Naive thymus-derived CD4-positive, alpha-beta T cell (primary cell): ENCODE measurements at regions of chr21 and their contacts with region 1.

Region 1: GRCh38 chr21:39313571-39314142 is at the start of gene BRWD1:
- DNase-seq: peak; percentile 73 to 90 (median 84)
- ATAC-seq: peak; percentile 71
- H3K4me3 ChIP-seq: peak within 1 kb of the TSS; percentile 88
- H3K4me3 Mint-ChIP-seq: peak within 1 kb of the TSS; percentile 91 to 97 (median 94)
- H3K27ac ChIP-seq: peak within 1 kb of the TSS; percentile 92
- H3K27ac Mint-ChIP-seq: peak within 1 kb of the TSS; percentile 89 to 98 (median 94)
- H3K4me1 ChIP-seq: peaks cover 11% of the 10 kb centered on the region in 2 donors
- H3K4me1 Mint-ChIP-seq: peaks cover 28 to 51% (median 45%) of the 10 kb centered on the region in 7 donors
- H3K27me3 ChIP-seq: no peaks in the 10 kb centered on the region
- H3K27me3 Mint-ChIP-seq: no peaks in the 10 kb centered on the region
- total RNA-seq, gene BRWD1: 41.1 to 108 (median 83.9) TPM

Region 2: GRCh38 chr21:39175154-39175553 is 138.5 kb before region 1 on chr21:
- CTCF ChIA-PET with region 1: no interaction called
- POLR2A ChIA-PET with region 1: no interaction called
- intact Hi-C with region 1: no loop called
- DNase-seq: peak in 5 of 9 donors; percentile 9 to 29 (median 13)
- ATAC-seq: no peak
- H3K4me3 ChIP-seq: no peak overlapping the region
- H3K4me3 Mint-ChIP-seq: no peak overlapping the region
- H3K27ac ChIP-seq: no peak overlapping the region
- H3K27ac Mint-ChIP-seq: no peak overlapping the region
- H3K4me1 ChIP-seq: no peaks in the 10 kb centered on the region
- H3K4me1 Mint-ChIP-seq: peaks cover 0 to 18% (median 11%) of the 10 kb centered on the region in 7 donors
- H3K27me3 ChIP-seq: no peaks in the 10 kb centered on the region
- H3K27me3 Mint-ChIP-seq: no peaks in the 10 kb centered on the region

Region 3: DNA sequence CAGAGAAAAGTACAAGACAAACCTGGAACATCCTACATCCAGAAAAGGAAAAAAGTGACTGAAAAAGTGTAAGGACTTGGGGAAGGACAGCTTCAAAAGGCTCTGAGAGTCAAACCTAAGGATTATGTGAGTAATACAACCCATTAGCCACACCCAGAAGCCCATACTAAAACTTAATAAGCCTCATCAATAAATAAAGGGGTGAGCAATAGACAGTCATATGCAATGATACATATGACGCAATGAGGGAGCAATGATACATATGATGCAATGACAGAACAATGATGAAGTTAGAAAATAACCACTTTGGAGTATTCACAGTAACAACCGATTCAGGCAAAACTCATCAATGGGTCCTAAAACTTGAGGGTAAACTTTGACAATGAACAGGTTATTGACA is 50.3 kb before region 1 on chr21:
- CTCF ChIA-PET with region 1: no interaction called
- POLR2A ChIA-PET with region 1: no interaction called
- intact Hi-C with region 1: loop called in 1 of 2 experiments (anchors 5 kb)
- DNase-seq: no peak
- ATAC-seq: no peak
- H3K4me3 ChIP-seq: no peak overlapping the region
- H3K4me3 Mint-ChIP-seq: no peak overlapping the region
- H3K27ac ChIP-seq: no peak overlapping the region
- H3K27ac Mint-ChIP-seq: no peak overlapping the region
- H3K4me1 ChIP-seq: no peaks in the 10 kb centered on the region
- H3K4me1 Mint-ChIP-seq: peaks cover 0 to 19% (median 8%) of the 10 kb centered on the region in 7 donors
- H3K27me3 ChIP-seq: no peaks in the 10 kb centered on the region
- H3K27me3 Mint-ChIP-seq: no peaks in the 10 kb centered on the region

Region 4: DNA sequence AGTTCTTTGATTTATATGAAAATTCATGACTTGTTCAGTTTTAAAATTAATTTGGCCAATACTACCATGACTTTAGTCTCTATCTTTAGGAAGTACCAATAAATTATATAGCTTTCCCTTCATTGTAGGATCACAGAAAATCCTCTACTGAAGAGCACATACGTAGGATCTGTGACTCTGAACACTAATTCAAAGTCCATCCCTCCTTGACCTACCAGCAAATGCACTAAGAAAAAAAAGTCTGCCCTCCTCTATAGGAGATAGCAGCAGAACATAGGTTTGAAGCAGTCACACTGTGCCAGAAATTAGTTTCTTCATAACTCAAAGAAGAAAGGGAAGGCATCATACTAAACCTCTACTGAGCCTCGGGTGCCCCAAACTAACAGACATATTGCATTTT is 16.8 kb before region 1 on chr21:
- CTCF ChIA-PET with region 1: no interaction called
- POLR2A ChIA-PET with region 1: interaction called, 13 read pairs
- intact Hi-C with region 1: no loop called
- DNase-seq: no peak
- ATAC-seq: no peak
- H3K4me3 ChIP-seq: no peak overlapping the region
- H3K4me3 Mint-ChIP-seq: peak overlapping the region in 2 of 10 donors; percentile 36 to 54
- H3K27ac ChIP-seq: no peak overlapping the region
- H3K27ac Mint-ChIP-seq: peak overlapping the region in 2 of 9 donors; percentile 37 to 62
- H3K4me1 ChIP-seq: peaks cover 9 to 12% of the 10 kb centered on the region in 2 donors
- H3K4me1 Mint-ChIP-seq: peaks cover 19 to 51% (median 39%) of the 10 kb centered on the region in 7 donors
- H3K27me3 ChIP-seq: no peaks in the 10 kb centered on the region
- H3K27me3 Mint-ChIP-seq: no peaks in the 10 kb centered on the region

Region 5: DNA sequence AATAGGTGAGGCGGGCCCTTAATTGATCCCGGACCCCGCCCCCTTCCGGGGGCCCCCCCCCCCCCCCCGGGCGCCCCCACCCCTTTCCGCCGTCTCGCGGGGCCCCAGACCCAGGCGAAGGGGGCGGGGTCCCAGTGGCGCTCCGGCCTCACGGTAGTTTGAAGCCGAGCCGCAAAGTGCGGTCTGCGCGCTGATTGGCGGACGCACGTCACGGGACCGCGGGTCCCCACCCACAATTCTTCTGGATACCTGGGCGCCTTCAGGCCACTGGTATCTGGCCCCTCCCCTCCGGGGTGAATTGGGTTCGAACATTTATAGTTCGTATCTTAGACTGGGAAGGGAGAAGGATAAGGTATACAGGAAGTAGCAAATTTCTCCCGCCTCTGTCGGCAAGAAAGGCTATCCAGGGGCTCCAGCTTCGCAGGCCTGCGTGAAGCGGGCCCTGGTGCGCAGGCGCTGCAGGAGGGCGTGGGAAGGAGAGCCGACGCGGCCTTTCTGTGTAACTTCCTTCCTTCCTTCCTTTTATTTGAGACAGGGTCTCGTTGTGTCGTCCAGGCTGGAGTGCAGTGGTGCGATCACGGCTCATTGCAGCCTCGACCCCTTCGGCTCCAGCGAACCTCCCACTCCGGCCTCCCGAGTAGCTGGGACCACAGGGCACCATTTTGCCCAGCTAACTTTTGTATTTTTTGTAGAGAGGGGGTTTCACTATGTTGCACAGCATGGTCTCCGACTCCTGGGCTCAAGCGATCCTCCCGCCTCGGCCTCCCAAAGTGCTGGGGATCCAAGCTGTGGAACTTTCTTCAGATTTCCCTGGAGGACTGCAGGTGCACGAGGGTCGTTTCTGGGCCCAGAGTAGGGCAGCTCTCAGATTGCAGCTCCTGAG is 35.8 kb after region 1 on chr21:
- CTCF ChIA-PET with region 1: interaction called, 6 read pairs
- POLR2A ChIA-PET with region 1: interaction called, 139 read pairs
- intact Hi-C with region 1: loop called (anchors 1 kb)
- DNase-seq: peak; percentile 91 to 98 (median 97)
- ATAC-seq: peak; percentile 91
- H3K4me3 ChIP-seq: peak overlapping the region; percentile 79
- H3K4me3 Mint-ChIP-seq: peak overlapping the region; percentile 88 to 99 (median 96)
- H3K27ac ChIP-seq: peak overlapping the region; percentile 87
- H3K27ac Mint-ChIP-seq: peak overlapping the region; percentile 94 to 100 (median 99)
- H3K4me1 ChIP-seq: peaks cover 20 to 25% of the 10 kb centered on the region in 2 donors
- H3K4me1 Mint-ChIP-seq: peaks cover 30 to 49% (median 37%) of the 10 kb centered on the region in 7 donors
- H3K27me3 ChIP-seq: no peaks in the 10 kb centered on the region
- H3K27me3 Mint-ChIP-seq: peaks cover 0 to 16% (median 0%) of the 10 kb centered on the region in 5 donors

Region 6: GRCh38 chr21:39379986-39380891 is 66.6 kb after region 1 on chr21:
- CTCF ChIA-PET with region 1: no interaction called
- POLR2A ChIA-PET with region 1: interaction called, 17 read pairs
- intact Hi-C with region 1: loop called (anchors 1 to 2 kb)
- DNase-seq: peak; percentile 76 to 91 (median 83)
- ATAC-seq: peak; percentile 99
- H3K4me3 ChIP-seq: peak overlapping the region; percentile 95
- H3K4me3 Mint-ChIP-seq: peak overlapping the region; percentile 88 to 95 (median 92)
- H3K27ac ChIP-seq: peak overlapping the region; percentile 84
- H3K27ac Mint-ChIP-seq: peak overlapping the region; percentile 33 to 95 (median 93)
- H3K4me1 ChIP-seq: peaks cover 7 to 10% of the 10 kb centered on the region in 2 donors
- H3K4me1 Mint-ChIP-seq: peaks cover 8 to 31% (median 24%) of the 10 kb centered on the region in 7 donors
- H3K27me3 ChIP-seq: no peaks in the 10 kb centered on the region
- H3K27me3 Mint-ChIP-seq: peaks cover 0 to 5% (median 4%) of the 10 kb centered on the region in 5 donors

Region 7: GRCh38 chr21:39445321-39446269 is 131.9 kb after region 1 on chr21 and contains the start of gene LCA5L:
- CTCF ChIA-PET with region 1: no interaction called
- POLR2A ChIA-PET with region 1: no interaction called
- intact Hi-C with region 1: loop called (anchors 1 to 2 kb)
- DNase-seq: peak; percentile 80 to 96 (median 90)
- ATAC-seq: peak; percentile 93
- H3K4me3 ChIP-seq: peak within 1 kb of the TSS; percentile 83
- H3K4me3 Mint-ChIP-seq: peak within 1 kb of the TSS; percentile 91 to 99 (median 94)
- H3K27ac ChIP-seq: peak within 1 kb of the TSS; percentile 76
- H3K27ac Mint-ChIP-seq: peak within 1 kb of the TSS; percentile 86 to 98 (median 94)
- H3K4me1 ChIP-seq: peaks cover 11 to 13% of the 10 kb centered on the region in 2 donors
- H3K4me1 Mint-ChIP-seq: peaks cover 8 to 26% (median 14%) of the 10 kb centered on the region in 7 donors
- H3K27me3 ChIP-seq: peaks cover 0 to 2% of the 10 kb centered on the region in 2 donors
- H3K27me3 Mint-ChIP-seq: peaks cover 0 to 44% (median 14%) of the 10 kb centered on the region in 5 donors
- total RNA-seq, gene LCA5L: not detected

Region 8: DNA sequence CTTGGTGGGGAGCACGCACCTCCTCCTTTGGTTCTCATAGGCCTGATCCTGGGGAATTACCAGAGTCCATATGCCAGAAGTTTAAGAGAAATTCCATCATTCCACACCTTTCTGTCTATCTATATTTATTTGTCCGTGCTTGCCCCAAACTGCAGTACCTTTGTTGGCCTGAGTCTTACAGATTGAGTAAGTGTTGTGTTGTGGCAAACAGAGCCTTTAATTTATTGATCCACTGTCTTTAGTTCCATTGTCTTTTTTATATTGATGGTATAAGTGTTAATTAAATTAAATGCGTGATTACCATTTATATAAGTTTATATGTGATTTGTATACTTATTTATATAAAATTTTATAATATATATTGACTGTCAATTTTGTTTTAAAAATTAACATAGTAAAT is 143.0 kb after region 1 on chr21:
- CTCF ChIA-PET with region 1: no interaction called
- POLR2A ChIA-PET with region 1: no interaction called
- intact Hi-C with region 1: no loop called
- DNase-seq: no peak
- ATAC-seq: no peak
- H3K4me3 ChIP-seq: no peak overlapping the region
- H3K4me3 Mint-ChIP-seq: no peak overlapping the region
- H3K27ac ChIP-seq: no peak overlapping the region
- H3K27ac Mint-ChIP-seq: no peak overlapping the region
- H3K4me1 ChIP-seq: no peaks in the 10 kb centered on the region
- H3K4me1 Mint-ChIP-seq: no peaks in the 10 kb centered on the region
- H3K27me3 ChIP-seq: no peaks in the 10 kb centered on the region
- H3K27me3 Mint-ChIP-seq: peaks cover 0 to 5% (median 0%) of the 10 kb centered on the region in 5 donors